GM12878 (cell line): ENCODE measurements at regions of chr1 and their contacts with region 1.

Region 1: DNA sequence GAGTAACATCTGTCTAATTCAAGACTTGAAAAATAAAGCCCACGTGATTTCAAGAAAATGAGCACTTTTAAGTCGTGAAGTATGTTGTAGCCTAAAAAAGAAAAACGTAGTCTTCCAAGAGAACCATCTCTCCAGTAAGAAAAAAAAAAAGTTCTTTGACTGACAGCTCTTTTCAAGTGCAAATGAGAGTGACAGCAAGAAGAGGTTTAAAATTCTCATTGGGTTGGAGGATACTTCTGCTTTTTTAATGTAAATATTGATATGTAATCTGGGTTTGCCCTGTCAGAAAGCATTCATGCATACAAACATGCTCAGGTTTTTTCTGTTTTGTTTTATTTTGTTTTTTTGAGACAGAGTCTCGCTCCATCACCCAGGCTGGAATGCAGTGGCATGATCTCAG is 32.3 kb upstream of the PRDM2 start:
- DNase-seq: peak; percentile 33
- ATAC-seq: peak; percentile 61
- H3K4me3 ChIP-seq: no peak overlapping the region
- H3K27ac ChIP-seq: peak overlapping the region; percentile 31
- H3K4me1 ChIP-seq: peaks cover 23% of the 10 kb centered on the region
- H3K27me3 ChIP-seq: no peaks in the 10 kb centered on the region
- CTCF ChIP-seq: no peak
- EP300 ChIP-seq: no peak
- POLR2A ChIP-seq: no peak
- RAD21 ChIP-seq: no peak

Region 2: DNA sequence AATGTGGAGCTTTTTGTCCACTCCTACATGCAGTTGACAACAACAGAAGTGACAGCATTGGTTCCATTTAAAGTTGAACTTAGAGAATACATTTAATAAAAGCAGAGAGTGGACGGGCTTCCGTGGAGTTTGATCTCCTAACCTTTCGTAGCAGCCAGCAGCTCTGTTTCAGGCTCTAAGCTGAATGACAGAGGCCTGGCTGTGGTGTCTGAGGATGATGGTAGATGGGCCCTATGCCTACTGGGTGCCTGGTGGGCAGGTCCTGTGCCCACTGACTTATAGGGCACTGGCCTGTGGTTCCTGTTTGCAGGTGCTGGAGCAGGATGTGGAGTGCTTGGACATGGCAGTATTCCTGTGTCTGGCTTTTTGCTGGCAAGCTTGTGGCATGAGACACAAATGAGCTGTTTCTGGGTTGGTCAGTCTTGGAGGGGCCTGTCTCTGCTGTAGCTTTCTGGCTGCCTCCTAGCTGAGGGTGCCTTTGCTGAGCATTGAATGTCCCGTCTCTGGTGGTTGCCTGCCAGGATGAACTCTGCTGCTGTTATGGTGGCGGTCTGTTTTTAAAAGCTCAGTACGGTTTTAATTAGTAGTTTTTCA is 86.9 kb after region 1 on chr1:
- CTCF ChIA-PET with region 1: interaction called, 3 read pairs
- POLR2A ChIA-PET with region 1: interaction called, 3 read pairs
- RAD21 ChIA-PET with region 1: interaction called, 10 read pairs
- SMC1A ChIA-PET with region 1: interaction called, 5 read pairs
- in situ Hi-C with region 1: no loop called
- intact Hi-C with region 1: no loop called
- DNase-seq: no peak
- ATAC-seq: peak; percentile 13
- H3K4me3 ChIP-seq: peak overlapping the region; percentile 19; the same call in 1 of the 2 replicates
- H3K27ac ChIP-seq: peak overlapping the region; percentile 56
- H3K4me1 ChIP-seq: peaks cover 26% of the 10 kb centered on the region
- H3K27me3 ChIP-seq: no peaks in the 10 kb centered on the region
- CTCF ChIP-seq: no peak
- EP300 ChIP-seq: no peak
- POLR2A ChIP-seq: peak; percentile 36; the same call in 1 of the 2 replicates
- RAD21 ChIP-seq: no peak